OCI-LY7 (cell line): ENCODE measurements at regions of chr21 and their contacts with region 1.

Region 1: DNA sequence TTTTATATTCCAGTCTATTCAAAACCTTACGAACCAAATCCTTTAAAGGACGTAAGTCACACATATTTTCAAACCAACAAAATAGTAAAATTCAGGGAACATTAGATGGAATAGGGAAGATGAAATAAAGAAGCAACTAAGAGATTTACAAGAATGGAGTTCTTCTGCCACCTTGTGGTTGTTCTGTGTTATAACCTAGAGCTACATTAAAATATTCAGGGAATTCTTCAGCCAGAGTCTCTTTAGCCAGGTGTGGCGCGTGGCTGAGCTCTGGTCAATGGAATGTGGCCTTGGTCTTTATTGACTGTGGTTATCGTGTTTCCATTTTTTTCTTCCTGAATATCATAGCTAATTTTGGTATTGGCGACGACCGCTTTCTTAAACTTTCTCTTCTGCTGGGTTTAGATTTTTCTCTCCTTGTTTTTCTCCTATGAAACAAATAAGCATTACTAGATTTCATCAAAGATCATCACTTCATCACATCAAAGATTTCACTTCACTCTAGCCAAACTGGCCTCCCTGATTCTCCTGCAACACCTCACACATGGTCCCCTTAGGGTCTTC is 221.3 kb downstream of the MRPL39 start:
- DNase-seq: peak; percentile 62
- H3K4me3 ChIP-seq: no peak overlapping the region
- H3K27ac ChIP-seq: no peak overlapping the region
- H3K4me1 ChIP-seq: no peaks in the 10 kb centered on the region
- CTCF ChIP-seq: peak; percentile 85

Region 2: DNA sequence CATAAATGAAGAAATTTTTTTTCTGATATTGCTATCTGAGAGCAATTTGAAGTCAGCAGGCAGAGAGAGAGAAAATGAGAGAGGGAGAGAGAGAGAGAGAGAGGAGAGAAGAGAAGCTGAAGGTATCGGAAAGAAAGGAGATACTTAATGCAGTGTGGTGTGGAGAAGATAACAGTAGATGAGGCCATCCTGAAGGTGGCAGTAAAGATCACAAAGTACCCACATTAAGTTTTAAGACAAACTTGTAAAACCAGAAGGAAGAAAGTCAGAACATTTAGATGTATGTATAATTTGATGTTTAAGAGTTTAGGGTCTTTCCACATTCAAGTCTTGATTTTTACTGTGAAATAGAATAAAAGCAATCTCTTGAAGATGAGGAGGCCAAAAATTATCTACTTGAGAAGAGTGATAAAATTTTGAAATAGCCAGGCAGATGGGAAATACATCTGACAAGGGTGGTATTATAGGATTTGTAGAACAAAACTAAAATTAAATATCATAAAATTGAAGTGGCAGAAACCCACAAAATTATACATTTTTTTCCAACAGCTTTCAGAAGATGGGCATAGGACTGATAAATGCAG is 1532.1 kb before region 1 on chr21:
- CTCF ChIA-PET with region 1: no interaction called
- POLR2A ChIA-PET with region 1: no interaction called
- intact Hi-C with region 1: loop called (anchors 10 kb)
- DNase-seq: peak; percentile 2
- H3K4me3 ChIP-seq: no peak overlapping the region
- H3K27ac ChIP-seq: no peak overlapping the region
- H3K4me1 ChIP-seq: no peaks in the 10 kb centered on the region
- CTCF ChIP-seq: peak; percentile 53